AG04449 (cell line): ENCODE measurements at regions of chr6 and their contacts with region 1.

Region 1: DNA sequence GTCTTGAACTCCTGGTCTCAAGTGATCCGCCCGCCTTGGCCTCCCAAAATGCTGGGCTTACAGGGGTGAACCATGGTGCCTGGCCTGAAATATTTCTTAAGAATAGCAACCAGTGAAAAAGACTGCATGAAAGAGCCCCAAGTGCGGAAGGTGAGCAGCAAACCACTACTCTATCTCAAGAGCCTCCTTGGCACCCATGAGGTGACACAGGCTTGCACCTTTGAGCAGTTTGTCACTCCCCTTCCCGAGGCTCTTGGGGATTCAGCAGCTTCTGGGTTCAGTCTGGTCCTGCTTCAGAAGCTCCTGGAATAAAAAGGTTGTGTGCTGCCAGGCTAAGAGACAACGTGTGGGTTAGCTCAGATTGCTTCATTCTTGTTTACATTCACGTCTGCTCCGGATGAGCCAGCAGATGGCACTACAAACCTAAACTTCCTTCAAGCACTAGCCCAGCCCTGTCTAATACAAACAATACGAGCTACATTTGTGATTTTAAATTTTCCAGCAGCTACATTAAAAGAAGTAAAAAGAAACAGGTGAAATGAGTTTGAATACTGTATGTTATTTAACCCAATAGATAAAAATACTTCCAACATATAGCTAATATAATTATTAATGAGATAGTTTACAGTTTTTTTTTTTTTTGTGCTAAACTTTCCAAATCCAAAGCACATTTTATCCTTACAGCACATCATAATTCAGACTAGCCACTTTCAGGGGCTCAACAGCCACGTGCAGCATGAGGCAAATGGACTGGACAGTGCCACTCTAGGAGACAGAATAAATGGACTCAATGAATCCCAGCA is 46.2 kb downstream of the GJA10 start:
- DNase-seq: peak; percentile 54
- H3K4me3 ChIP-seq: no peak overlapping the region
- CTCF ChIP-seq: peak; percentile 78

Region 2: GRCh38 chr6:89559487-89559886 is 380.9 kb before region 1 on chr6:
- CTCF ChIA-PET with region 1: no interaction called
- POLR2A ChIA-PET with region 1: no interaction called
- DNase-seq: no peak
- H3K4me3 ChIP-seq: no peak overlapping the region
- CTCF ChIP-seq: no peak

Region 3: DNA sequence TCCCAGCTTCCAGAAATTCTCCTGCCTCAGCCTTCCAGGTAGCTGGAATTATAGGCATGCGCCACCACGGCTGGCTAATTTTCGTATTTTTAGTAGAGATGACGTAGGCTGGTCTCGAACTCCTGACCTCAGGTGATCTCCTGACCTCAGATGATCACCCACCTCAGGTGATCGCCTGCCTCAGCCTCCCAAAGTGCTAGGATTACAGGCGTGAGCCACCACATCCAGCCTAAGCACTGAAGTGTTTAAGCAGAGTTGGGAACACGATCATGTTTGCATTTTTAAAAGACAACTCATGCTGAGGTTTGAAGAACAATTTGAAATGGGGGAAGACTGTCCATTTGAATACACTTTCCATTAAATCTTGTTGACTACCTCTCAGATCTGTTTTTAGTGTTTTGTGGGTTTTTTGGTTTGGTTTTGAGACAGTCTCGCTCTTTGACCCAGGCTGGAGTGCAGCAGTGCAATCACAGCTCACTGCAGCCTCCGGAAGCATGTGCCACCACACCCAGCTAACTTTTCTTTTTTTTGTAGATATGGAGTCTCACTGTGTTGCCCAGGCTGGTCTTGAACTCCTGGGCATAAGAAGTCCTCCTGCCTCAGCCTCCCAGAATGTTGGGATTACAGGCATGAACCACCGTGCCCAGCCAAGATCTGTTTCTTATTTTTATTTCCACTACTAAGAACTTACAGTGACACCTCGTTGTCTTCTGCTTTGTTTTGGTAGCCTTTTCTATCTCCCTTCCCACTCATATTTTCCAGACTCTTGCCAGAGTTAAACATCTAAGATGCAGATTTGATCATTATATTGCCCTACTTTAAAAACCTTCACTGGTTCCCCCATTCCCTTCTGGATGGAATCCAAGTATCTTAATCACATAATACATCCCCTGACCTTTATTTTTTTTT is 105.3 kb before region 1 on chr6:
- CTCF ChIA-PET with region 1: no interaction called
- POLR2A ChIA-PET with region 1: no interaction called
- DNase-seq: no peak
- H3K4me3 ChIP-seq: no peak overlapping the region
- CTCF ChIP-seq: no peak

Region 4: DNA sequence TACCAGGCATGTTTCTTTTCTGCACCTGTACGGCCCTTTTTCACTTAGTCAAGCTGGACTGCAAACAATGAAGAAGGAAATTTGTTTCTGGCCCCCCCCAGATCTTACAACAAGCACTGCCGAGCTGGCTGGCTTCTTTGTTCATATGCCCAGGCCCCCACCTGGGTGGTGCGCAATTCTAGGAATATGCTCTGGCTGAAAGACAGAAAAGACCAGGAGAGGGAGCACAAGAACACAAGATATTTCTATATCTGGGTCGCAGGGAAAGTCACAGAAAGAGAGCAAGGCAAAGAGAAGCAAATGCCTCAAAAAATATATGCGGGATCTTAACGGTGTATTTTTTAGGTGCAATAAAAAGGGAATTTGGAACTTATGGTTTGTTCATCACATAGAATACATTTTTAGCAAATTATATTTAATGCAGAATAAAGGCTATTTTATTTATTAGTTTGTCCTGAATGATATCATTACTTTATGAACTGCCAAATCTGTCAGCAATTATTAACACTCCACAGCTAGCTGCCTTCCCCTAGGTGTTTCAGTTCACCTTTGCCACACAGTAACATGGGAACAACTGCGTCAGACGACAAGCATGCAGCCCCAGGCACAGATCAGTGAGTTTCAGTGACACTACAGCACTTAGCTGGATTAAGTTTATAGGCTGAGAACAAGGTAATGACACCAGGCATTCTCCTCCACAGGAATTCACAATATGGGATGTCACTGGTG is 30.3 kb after region 1 on chr6:
- CTCF ChIA-PET with region 1: interaction called, 16 read pairs
- POLR2A ChIA-PET with region 1: no interaction called
- DNase-seq: no peak
- H3K4me3 ChIP-seq: no peak overlapping the region
- CTCF ChIP-seq: peak; percentile 58

Region 5: GRCh38 chr6:90383196-90383822 is 442.9 kb after region 1 on chr6:
- CTCF ChIA-PET with region 1: interaction called, 12 read pairs
- POLR2A ChIA-PET with region 1: no interaction called
- DNase-seq: no peak
- H3K4me3 ChIP-seq: no peak overlapping the region
- CTCF ChIP-seq: no peak

Region 6: DNA sequence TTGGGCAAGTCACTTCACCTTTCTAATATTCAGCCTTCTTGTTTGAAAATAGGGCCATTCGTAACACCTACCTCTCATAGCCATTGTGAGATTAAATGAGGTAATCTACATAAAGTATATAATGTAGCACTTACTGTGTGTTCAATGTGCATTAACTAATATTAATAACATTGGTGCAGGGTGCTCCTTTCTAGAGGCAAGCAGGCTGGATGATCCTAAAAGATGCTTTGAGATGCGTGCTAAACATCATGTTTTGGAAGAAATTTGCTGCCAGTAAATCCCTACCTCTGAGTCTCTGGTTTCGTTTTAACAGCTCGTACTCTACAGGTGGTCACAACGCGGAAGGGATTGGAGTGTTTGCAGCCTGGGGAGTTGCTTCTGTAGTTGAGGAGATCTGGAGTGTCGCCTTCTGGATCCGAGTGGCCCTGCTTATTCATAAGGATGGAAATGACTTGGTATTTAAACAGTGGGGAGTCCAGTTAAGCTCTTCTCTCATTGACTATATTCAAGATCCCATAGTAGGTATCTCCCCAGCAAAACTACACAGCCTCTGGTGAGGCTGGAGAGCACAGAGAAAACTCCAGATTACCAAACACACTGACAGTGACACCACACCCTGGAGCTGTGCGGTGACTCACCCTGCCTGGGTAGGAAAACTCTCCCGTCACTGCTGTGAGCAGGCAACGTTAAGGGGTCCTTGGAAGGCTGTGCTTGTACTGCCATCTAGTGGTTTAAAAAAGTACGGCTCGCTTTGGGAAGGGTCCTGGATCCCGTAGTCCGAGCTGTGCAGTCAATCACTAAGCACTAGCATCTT is 538.6 kb after region 1 on chr6:
- CTCF ChIA-PET with region 1: interaction called, 291 read pairs
- POLR2A ChIA-PET with region 1: no interaction called
- DNase-seq: peak; percentile 65
- H3K4me3 ChIP-seq: no peak overlapping the region
- CTCF ChIP-seq: peak; percentile 71

Region 7: DNA sequence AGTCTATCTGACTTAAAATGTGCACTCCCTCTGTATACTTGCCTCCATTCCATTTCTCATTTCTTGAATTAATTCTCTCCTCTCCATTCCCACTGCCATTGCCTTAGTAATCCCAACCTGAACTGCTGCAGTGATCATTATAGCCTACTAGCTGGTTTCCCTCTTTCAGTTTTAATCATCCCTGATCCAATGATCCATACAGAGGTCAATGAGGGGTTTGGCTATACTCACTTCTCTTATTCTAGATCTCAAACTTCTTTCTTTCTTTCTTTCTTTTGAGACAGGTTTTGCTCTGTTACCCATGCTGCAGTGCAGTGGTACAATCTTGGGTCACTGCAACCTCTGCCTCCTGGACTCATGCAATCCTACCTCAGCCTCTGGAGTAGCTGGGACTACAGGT is 628.8 kb after region 1 on chr6:
- CTCF ChIA-PET with region 1: interaction called, 11 read pairs
- POLR2A ChIA-PET with region 1: no interaction called
- DNase-seq: no peak
- H3K4me3 ChIP-seq: no peak overlapping the region
- CTCF ChIP-seq: no peak